CD8-positive, alpha-beta T cell (primary cell): ENCODE measurements at regions of chr18 and their contacts with region 1.

Region 1: GRCh38 chr18:12934454-12935071 is 13.2 kb upstream of the SEH1L start:
- DNase-seq: peak; percentile 63 to 89 (median 80)
- ATAC-seq: peak; percentile 90
- H3K4me3 ChIP-seq: no peak overlapping the region
- H3K4me3 Mint-ChIP-seq: no peak overlapping the region
- H3K27ac ChIP-seq: no peak overlapping the region
- H3K27ac Mint-ChIP-seq: no peak overlapping the region
- H3K4me1 ChIP-seq: no peaks in the 10 kb centered on the region
- H3K4me1 Mint-ChIP-seq: peaks cover 12% of the 10 kb centered on the region
- H3K27me3 ChIP-seq: no peaks in the 10 kb centered on the region
- H3K27me3 Mint-ChIP-seq: peaks cover 4% of the 10 kb centered on the region
- CTCF ChIP-seq: peak; percentile 95

Region 2: DNA sequence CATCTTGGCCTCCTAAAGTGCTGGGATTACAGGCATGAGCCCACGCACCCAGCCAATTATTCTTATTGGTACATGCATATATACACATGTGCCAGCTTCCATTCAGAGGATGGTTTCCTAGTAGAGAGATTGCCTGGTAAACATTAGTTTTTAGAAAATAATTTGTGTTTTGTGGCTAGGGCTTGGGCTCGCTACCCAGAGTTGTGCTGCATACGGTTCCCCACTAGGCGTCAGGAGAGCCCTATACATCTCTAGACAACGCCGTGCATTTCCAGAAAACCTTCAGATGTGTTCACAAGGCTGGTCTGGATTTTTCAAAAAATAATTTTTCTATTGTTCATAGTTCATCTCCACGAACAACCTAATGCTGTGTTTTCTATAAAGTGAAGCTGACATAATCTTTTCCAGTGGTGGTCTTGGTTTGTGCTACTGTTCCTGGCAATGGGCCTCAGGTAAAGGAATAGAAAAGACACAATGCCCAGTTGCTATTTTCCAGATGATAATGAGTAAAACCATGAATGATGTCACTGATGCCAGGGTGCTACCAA is 542.9 kb before region 1 on chr18:
- CTCF ChIA-PET with region 1: interaction called, 28 read pairs
- POLR2A ChIA-PET with region 1: no interaction called
- intact Hi-C with region 1: loop called (anchors 1 to 2 kb)
- DNase-seq: peak in 8 of 9 experiments; percentile 28 to 74 (median 56)
- ATAC-seq: peak; percentile 99
- H3K4me3 ChIP-seq: no peak overlapping the region
- H3K4me3 Mint-ChIP-seq: no peak overlapping the region
- H3K27ac ChIP-seq: no peak overlapping the region
- H3K27ac Mint-ChIP-seq: no peak overlapping the region
- H3K4me1 ChIP-seq: no peaks in the 10 kb centered on the region
- H3K4me1 Mint-ChIP-seq: no peaks in the 10 kb centered on the region
- H3K27me3 ChIP-seq: no peaks in the 10 kb centered on the region
- H3K27me3 Mint-ChIP-seq: peaks cover 15% of the 10 kb centered on the region
- CTCF ChIP-seq: peak; percentile 78

Region 3: GRCh38 chr18:12737243-12737902 is 197.2 kb before region 1 on chr18:
- CTCF ChIA-PET with region 1: interaction called, 201 read pairs
- POLR2A ChIA-PET with region 1: interaction called, 3 read pairs
- intact Hi-C with region 1: no loop called
- DNase-seq: no peak
- ATAC-seq: no peak
- H3K4me3 ChIP-seq: no peak overlapping the region
- H3K4me3 Mint-ChIP-seq: no peak overlapping the region
- H3K27ac ChIP-seq: no peak overlapping the region
- H3K27ac Mint-ChIP-seq: no peak overlapping the region
- H3K4me1 ChIP-seq: no peaks in the 10 kb centered on the region
- H3K4me1 Mint-ChIP-seq: no peaks in the 10 kb centered on the region
- H3K27me3 ChIP-seq: no peaks in the 10 kb centered on the region
- H3K27me3 Mint-ChIP-seq: no peaks in the 10 kb centered on the region
- CTCF ChIP-seq: no peak

Region 4: GRCh38 chr18:12890506-12890905 is 44.1 kb before region 1 on chr18:
- CTCF ChIA-PET with region 1: interaction called, 67 read pairs
- POLR2A ChIA-PET with region 1: no interaction called
- intact Hi-C with region 1: loop called (anchors 2 to 5 kb)
- DNase-seq: no peak
- ATAC-seq: no peak
- H3K4me3 ChIP-seq: no peak overlapping the region
- H3K4me3 Mint-ChIP-seq: no peak overlapping the region
- H3K27ac ChIP-seq: no peak overlapping the region
- H3K27ac Mint-ChIP-seq: no peak overlapping the region
- H3K4me1 ChIP-seq: no peaks in the 10 kb centered on the region
- H3K4me1 Mint-ChIP-seq: peaks cover 7% of the 10 kb centered on the region
- H3K27me3 ChIP-seq: peaks cover 0 to 6% of the 10 kb centered on the region in 2 experiments
- H3K27me3 Mint-ChIP-seq: peaks cover 12% of the 10 kb centered on the region
- CTCF ChIP-seq: no peak

Region 5: DNA sequence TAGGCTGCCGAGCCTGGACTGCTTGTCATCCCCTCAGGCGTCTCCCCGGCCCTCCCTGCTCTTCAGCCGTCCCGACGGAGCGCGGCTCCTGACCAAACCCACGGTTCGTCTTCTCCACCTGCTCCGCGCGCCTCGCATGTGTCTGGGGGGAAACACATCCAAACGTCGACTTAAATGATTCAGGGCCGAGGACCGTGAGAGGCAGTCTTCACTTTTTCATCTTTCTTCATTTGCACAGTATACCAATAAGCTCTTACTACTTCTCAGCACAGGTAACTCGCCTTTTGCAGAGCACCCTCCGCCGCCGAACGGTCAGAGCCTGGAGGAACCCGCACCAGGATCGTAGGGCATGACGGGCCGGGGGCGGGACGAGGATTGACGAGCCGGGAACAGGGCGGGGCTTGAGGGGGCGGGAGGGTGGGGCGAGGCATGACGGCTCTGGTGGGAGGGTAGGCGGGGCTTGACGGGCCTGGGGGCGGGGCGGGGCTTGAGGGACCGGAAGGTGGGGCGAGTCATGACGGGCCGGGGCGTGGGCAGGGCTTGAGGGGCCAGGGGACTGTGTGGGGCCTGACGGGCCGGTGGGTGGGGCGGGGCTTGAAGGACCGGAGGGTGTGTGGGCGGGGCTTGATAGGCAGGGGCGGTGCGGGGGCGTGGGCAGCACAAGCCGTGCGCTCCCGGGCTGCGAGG is 12.9 kb after region 1 on chr18 and contains the start of gene SEH1L:
- CTCF ChIA-PET with region 1: interaction called, 23 read pairs
- POLR2A ChIA-PET with region 1: interaction called, 3 read pairs
- intact Hi-C with region 1: no loop called
- DNase-seq: peak; percentile 97 to 99 (median 99)
- ATAC-seq: peak; percentile 82
- H3K4me3 ChIP-seq: peak within 1 kb of the TSS; percentile 66 to 91
- H3K4me3 Mint-ChIP-seq: peak within 1 kb of the TSS; percentile 96
- H3K27ac ChIP-seq: peak within 1 kb of the TSS; percentile 83 to 85
- H3K27ac Mint-ChIP-seq: peak within 1 kb of the TSS; percentile 99
- H3K4me1 ChIP-seq: peaks cover 22% of the 10 kb centered on the region
- H3K4me1 Mint-ChIP-seq: peaks cover 39% of the 10 kb centered on the region
- H3K27me3 ChIP-seq: no peaks in the 10 kb centered on the region
- H3K27me3 Mint-ChIP-seq: no peaks in the 10 kb centered on the region
- CTCF ChIP-seq: no peak
- total RNA-seq, gene SEH1L: 23.9 to 27.6 TPM

Region 6: GRCh38 chr18:13726232-13726971 is 791.8 kb after region 1 on chr18 and contains the starts of genes FAM210A and RNMT:
- CTCF ChIA-PET with region 1: no interaction called
- POLR2A ChIA-PET with region 1: no interaction called
- intact Hi-C with region 1: no loop called
- DNase-seq: peak; percentile 82 to 98 (median 94)
- ATAC-seq: peak; percentile 91
- H3K4me3 ChIP-seq: peak within 1 kb of the TSS; percentile 74 to 87
- H3K4me3 Mint-ChIP-seq: peak within 1 kb of the TSS; percentile 80
- H3K27ac ChIP-seq: peak within 1 kb of the TSS; percentile 90 to 93
- H3K27ac Mint-ChIP-seq: peak within 1 kb of the TSS; percentile 99
- H3K4me1 ChIP-seq: peaks cover 41% of the 10 kb centered on the region
- H3K4me1 Mint-ChIP-seq: peaks cover 64% of the 10 kb centered on the region
- H3K27me3 ChIP-seq: no peaks in the 10 kb centered on the region
- H3K27me3 Mint-ChIP-seq: no peaks in the 10 kb centered on the region
- CTCF ChIP-seq: no peak
- total RNA-seq, gene FAM210A: 8.3 to 9.1 TPM
- total RNA-seq, gene RNMT: 159 to 160 TPM